KBM-7 (cell line): ENCODE measurements at regions of chr9 and their contacts with region 1.

Region 1: GRCh38 chr9:38088006-38088925 is 19.2 kb upstream of the SHB start:
- DNase-seq: peak; percentile 54

Region 2: DNA sequence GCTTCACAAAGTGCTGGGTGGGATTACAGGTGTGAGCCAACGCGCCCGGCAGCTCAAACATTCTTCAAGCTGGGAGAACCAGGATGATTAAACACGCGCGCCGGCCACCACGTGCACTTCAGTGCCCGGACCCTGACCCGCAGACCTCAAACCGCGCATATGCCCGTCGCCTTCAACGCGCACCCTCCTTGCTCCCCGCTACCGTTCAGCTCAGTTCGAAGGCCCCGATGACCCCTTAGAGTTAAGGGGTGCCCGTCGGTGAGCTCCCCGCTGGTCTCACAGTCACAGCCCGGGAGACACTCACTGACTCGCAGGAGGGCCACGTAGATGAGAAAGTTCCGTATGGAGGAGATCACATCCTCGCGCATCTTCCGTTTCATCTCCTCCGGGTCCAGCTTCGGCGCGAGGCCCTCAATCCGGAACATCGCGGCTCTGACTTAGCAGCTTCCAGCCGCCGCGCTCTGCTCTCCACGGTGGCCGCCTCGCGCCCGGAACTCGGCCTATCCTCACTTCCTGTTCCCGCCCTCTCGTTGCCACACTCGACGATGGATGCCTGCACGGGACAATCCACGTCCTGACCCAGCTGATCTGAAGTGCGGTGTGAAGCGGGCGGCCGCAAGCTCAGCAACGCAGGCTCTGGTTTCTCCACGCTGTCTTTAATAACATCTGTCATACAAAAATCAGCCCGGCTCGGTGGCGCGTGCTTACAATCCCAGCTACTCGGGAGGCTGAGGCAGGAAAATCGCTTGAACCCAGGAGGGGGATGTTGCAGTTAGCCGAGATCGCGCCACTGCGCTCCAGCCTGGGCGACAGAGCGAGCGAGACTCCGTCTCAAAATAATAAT is 495.9 kb before region 1 on chr9 and contains the start of gene TOMM5:
- in situ Hi-C with region 1: loop called (anchors 25 kb)
- DNase-seq: peak; percentile 93

Region 3: GRCh38 chr9:37746848-37747753 is 341.2 kb before region 1 on chr9:
- in situ Hi-C with region 1: loop called (anchors 25 kb)
- DNase-seq: peak; percentile 68

Region 4: GRCh38 chr9:37820142-37820541 is 268.1 kb before region 1 on chr9:
- in situ Hi-C with region 1: no loop called
- DNase-seq: no peak